Endothelial cell of umbilical vein (primary cell): ENCODE measurements at regions of chr5 and their contacts with region 1.

Region 1: DNA sequence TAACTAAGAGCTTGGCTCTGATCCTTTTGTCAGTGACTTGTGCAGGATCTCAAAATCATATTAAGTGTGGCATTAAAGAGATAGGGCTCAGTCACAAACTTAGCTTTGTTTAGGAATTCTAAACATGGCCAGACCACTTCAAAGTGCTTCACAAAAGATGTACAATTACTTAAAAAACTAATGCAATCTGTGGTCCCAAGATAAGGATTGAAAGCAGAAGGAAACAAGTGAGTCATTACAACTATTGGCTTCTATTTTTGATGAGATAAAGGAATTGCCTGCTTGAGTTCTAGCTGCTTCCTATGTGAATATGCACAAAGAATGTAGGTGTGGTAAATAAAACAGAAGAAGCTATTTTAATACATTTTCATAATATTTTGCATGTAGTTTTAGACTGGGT is 44.9 kb upstream of the SLC12A2 start:
- DNase-seq: peak; percentile 94
- H3K4me3 ChIP-seq: no peak overlapping the region
- H3K27ac ChIP-seq: peak overlapping the region; percentile 87
- H3K4me1 ChIP-seq: peaks cover 29% of the 10 kb centered on the region
- H3K27me3 ChIP-seq: no peaks in the 10 kb centered on the region
- CTCF ChIP-seq: no peak
- POLR2A ChIP-seq: peak; percentile 83

Region 2: DNA sequence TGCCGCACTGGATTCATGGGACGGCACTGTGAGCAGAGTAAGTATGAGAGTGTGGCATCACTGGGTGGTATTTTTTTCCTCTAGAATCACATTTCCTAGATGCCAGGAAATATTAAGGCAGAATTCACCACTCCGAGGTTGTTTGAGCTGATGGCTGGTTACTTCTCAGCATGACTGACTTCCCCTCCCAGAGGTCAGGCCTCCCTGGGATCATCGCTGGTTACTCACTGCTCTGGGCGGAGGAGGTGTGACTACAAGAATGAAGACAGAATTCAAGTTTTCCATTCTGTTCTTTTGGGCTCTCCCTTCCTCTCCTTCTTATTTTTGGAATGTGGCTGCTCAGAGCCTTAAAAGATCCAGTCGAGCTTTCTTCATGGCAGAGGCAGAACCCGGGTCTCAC is 597.8 kb before region 1 on chr5:
- CTCF ChIA-PET with region 1: no interaction called
- POLR2A ChIA-PET with region 1: no interaction called
- dilution Hi-C with region 1: no loop called
- intact Hi-C with region 1: no loop called
- DNase-seq: no peak
- H3K4me3 ChIP-seq: no peak overlapping the region
- H3K27ac ChIP-seq: no peak overlapping the region
- H3K4me1 ChIP-seq: no peaks in the 10 kb centered on the region
- H3K27me3 ChIP-seq: peaks cover 6 to 20% of the 10 kb centered on the region in 2 experiments
- CTCF ChIP-seq: no peak
- POLR2A ChIP-seq: no peak

Region 3: DNA sequence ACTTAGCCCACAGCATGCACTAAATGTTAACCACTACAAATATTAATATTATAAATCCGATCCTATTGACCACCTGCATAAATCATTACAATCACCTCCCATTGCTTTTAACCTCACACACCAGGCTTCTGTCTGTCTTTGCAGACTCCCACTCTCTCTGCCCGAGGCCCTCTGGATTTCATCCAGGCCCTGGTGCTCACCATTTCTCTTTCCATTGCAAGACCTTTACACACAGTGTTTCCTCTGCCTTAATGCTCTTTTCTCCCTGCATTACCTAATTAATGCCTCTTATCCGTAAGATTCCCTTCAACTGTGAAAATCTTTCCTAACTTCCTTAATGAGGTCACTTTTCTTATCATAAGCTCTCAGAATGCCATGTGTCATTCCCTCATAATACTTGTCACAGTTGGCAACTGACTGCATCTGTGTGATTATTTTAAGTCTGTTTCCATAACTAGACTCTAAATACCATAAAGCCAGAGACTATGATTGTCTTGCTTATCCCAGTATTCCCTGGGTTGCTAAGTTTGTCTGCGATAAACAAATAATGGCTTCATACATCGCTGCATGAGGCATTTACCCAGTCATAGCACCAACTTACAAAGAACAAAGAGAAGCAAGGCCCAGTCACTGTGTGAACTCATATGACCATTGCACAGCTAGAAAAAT is 180.4 kb before region 1 on chr5:
- CTCF ChIA-PET with region 1: no interaction called
- POLR2A ChIA-PET with region 1: no interaction called
- dilution Hi-C with region 1: no loop called
- intact Hi-C with region 1: loop called (anchors 1 kb)
- DNase-seq: peak; percentile 89
- H3K4me3 ChIP-seq: no peak overlapping the region
- H3K27ac ChIP-seq: peak overlapping the region; percentile 84
- H3K4me1 ChIP-seq: peaks cover 27% of the 10 kb centered on the region
- H3K27me3 ChIP-seq: no peaks in the 10 kb centered on the region
- CTCF ChIP-seq: no peak
- POLR2A ChIP-seq: no peak

Region 4: GRCh38 chr5:127885176-127885575 is 153.5 kb before region 1 on chr5:
- CTCF ChIA-PET with region 1: interaction called, 4 read pairs
- POLR2A ChIA-PET with region 1: no interaction called
- dilution Hi-C with region 1: no loop called
- intact Hi-C with region 1: loop called (anchors 1 kb)
- DNase-seq: peak; percentile 25
- H3K4me3 ChIP-seq: no peak overlapping the region
- H3K27ac ChIP-seq: no peak overlapping the region
- H3K4me1 ChIP-seq: peaks cover 14% of the 10 kb centered on the region
- H3K27me3 ChIP-seq: no peaks in the 10 kb centered on the region
- CTCF ChIP-seq: no peak
- POLR2A ChIP-seq: no peak

Region 5: GRCh38 chr5:127959152-127959764 is 79.4 kb before region 1 on chr5:
- CTCF ChIA-PET with region 1: interaction called, 16 read pairs
- POLR2A ChIA-PET with region 1: interaction called, 3 read pairs
- dilution Hi-C with region 1: no loop called
- intact Hi-C with region 1: loop called (anchors 1 kb)
- DNase-seq: peak; percentile 86
- H3K4me3 ChIP-seq: no peak overlapping the region
- H3K27ac ChIP-seq: peak overlapping the region; percentile 64
- H3K4me1 ChIP-seq: peaks cover 44% of the 10 kb centered on the region
- H3K27me3 ChIP-seq: no peaks in the 10 kb centered on the region
- CTCF ChIP-seq: no peak
- POLR2A ChIP-seq: no peak

Region 6: DNA sequence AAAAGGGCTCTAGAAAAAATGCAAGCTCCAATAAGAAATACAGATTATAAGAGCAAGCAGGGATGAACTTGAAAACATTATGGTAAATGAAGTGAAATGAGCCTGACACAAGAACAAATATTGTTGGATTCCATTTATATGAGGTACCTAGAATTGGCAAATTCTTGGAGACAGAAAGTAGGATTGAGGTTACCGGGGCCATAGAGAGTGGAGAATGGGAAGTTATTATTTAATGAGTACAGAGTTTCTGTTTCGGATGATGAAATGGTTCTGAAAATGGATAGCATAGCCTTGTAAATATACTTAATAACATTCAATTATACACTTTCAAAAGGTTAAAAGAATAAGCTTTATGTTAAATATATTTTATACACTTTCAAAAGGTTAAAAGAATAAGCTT is 30.7 kb before region 1 on chr5:
- CTCF ChIA-PET with region 1: no interaction called
- POLR2A ChIA-PET with region 1: no interaction called
- dilution Hi-C with region 1: no loop called
- intact Hi-C with region 1: no loop called
- DNase-seq: no peak
- H3K4me3 ChIP-seq: no peak overlapping the region
- H3K27ac ChIP-seq: no peak overlapping the region
- H3K4me1 ChIP-seq: no peaks in the 10 kb centered on the region
- H3K27me3 ChIP-seq: no peaks in the 10 kb centered on the region
- CTCF ChIP-seq: no peak
- POLR2A ChIP-seq: no peak

Region 7: DNA sequence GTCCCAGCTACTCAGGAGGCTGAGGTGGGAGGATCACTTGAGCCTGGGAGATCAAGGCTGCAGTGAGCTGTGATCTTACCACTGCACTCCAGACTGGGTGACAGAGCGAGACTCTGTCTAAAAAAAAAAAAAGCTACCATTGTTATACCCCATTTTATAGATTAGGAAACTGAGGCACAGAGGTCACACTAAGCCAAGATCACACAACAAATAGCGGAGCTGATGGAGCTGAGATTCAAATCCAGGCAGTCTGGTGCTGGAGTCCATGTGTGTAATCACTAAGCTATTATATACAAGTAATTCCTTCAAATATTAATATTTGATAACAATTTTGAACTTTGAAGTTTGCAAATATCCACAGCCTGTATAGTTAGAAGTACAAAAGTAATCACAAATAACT is 38.9 kb after region 1 on chr5:
- CTCF ChIA-PET with region 1: interaction called, 11 read pairs
- POLR2A ChIA-PET with region 1: interaction called, 6 read pairs
- dilution Hi-C with region 1: no loop called
- intact Hi-C with region 1: no loop called
- DNase-seq: no peak
- H3K4me3 ChIP-seq: no peak overlapping the region
- H3K27ac ChIP-seq: no peak overlapping the region
- H3K4me1 ChIP-seq: peaks cover 8% of the 10 kb centered on the region
- H3K27me3 ChIP-seq: no peaks in the 10 kb centered on the region
- CTCF ChIP-seq: no peak
- POLR2A ChIP-seq: no peak

Region 8: GRCh38 chr5:128201065-128201926 is 162.7 kb after region 1 on chr5:
- CTCF ChIA-PET with region 1: interaction called, 5 read pairs
- POLR2A ChIA-PET with region 1: no interaction called
- dilution Hi-C with region 1: no loop called
- intact Hi-C with region 1: loop called (anchors 1 kb)
- DNase-seq: peak; percentile 63
- H3K4me3 ChIP-seq: no peak overlapping the region
- H3K27ac ChIP-seq: no peak overlapping the region
- H3K4me1 ChIP-seq: peaks cover 10% of the 10 kb centered on the region
- H3K27me3 ChIP-seq: no peaks in the 10 kb centered on the region
- CTCF ChIP-seq: peak; percentile 79 to 85
- POLR2A ChIP-seq: no peak